HCT116 (cell line): ENCODE measurements at regions of chr5 and their contacts with region 1.

Region 1: DNA sequence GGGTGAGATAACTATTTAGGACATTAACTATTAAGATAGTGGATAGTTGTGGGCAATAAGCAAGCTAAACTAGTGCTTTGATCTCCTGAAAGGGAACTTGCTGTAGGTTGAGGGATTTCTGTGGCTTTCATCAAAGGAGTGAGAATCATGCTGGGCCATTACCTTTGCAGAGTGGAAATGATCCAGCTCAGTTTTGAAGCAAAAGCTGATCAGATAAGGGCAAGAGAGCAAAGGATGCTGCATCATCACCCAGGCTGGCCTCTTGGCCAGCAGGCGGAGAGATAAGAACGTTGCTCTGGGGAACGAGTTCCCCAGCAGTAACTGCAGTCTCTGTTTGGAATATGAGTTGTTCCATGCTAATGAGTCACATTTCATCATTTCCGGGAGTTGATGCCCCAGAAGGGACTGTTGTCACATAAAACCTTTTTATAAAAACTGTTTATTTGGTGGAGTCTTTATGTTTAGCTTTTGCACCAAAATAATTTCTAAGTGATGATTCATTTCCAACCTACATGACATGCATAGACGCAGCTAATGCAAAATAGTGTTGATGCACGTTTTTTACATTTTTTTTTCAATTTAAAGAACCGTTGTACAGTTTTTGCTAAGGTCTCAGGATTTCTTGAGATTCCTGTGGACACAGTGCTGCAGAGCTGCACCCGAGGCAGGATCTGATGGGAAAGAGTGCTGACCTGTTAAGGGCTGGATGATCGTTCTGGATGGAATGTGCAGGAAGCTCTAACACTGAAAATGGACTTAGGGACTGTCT is 99.3 kb downstream of the ACTBL2 start:
- DNase-seq: peak; percentile 92
- ATAC-seq: peak; percentile 96
- H3K4me3 ChIP-seq: peak overlapping the region in 1 of 2 experiments; percentile 17; a peak in 1 of 4 replicates
- H3K27ac ChIP-seq: peak overlapping the region; percentile 95
- H3K4me1 ChIP-seq: peaks cover 27 to 37% of the 10 kb centered on the region in 2 experiments
- H3K27me3 ChIP-seq: no peaks in the 10 kb centered on the region
- CTCF ChIP-seq: 0 out of 6 replicates have a peak, but pooled peaks of 1 of the 3 experiments have one; percentile 17
- POLR2A ChIP-seq: no peak
- RAD21 ChIP-seq: peak; percentile 50

Region 2: GRCh38 chr5:56112526-56113121 is 1270.7 kb before region 1 on chr5:
- CTCF ChIA-PET with region 1: no interaction called
- POLR2A ChIA-PET with region 1: no interaction called
- RAD21 ChIA-PET with region 1: no interaction called
- intact Hi-C with region 1: no loop called
- DNase-seq: no peak
- ATAC-seq: no peak
- H3K4me3 ChIP-seq: no peak overlapping the region
- H3K27ac ChIP-seq: no peak overlapping the region
- H3K4me1 ChIP-seq: no peaks in the 10 kb centered on the region
- H3K27me3 ChIP-seq: no peaks in the 10 kb centered on the region
- CTCF ChIP-seq: no peak
- POLR2A ChIP-seq: no peak
- RAD21 ChIP-seq: no peak

Region 3: GRCh38 chr5:57184322-57184721 is 199.0 kb before region 1 on chr5:
- CTCF ChIA-PET with region 1: no interaction called
- POLR2A ChIA-PET with region 1: no interaction called
- RAD21 ChIA-PET with region 1: no interaction called
- intact Hi-C with region 1: no loop called
- DNase-seq: no peak
- ATAC-seq: peak; percentile 85
- H3K4me3 ChIP-seq: no peak overlapping the region
- H3K27ac ChIP-seq: no peak overlapping the region
- H3K4me1 ChIP-seq: no peaks in the 10 kb centered on the region; a peak in 1 of 4 replicates
- H3K27me3 ChIP-seq: no peaks in the 10 kb centered on the region
- CTCF ChIP-seq: peak in 2 of 3 experiments; percentile 16 to 17; a peak in 2 of 6 replicates
- POLR2A ChIP-seq: no peak
- RAD21 ChIP-seq: peak; percentile 21; the same call in 1 of the 2 replicates

Region 4: GRCh38 chr5:57366744-57367143 is 16.5 kb before region 1 on chr5:
- CTCF ChIA-PET with region 1: no interaction called
- POLR2A ChIA-PET with region 1: interaction called, 12 read pairs
- RAD21 ChIA-PET with region 1: interaction called in 1 of 2 experiments, 3 read pairs
- intact Hi-C with region 1: loop called (anchors 1 kb)
- DNase-seq: peak; percentile 95
- ATAC-seq: peak; percentile 89
- H3K4me3 ChIP-seq: peak overlapping the region in 1 of 2 experiments; percentile 34; a peak in 2 of 4 replicates
- H3K27ac ChIP-seq: peak overlapping the region; percentile 93
- H3K4me1 ChIP-seq: peaks cover 44 to 69% of the 10 kb centered on the region in 2 experiments
- H3K27me3 ChIP-seq: no peaks in the 10 kb centered on the region
- CTCF ChIP-seq: no peak
- POLR2A ChIP-seq: no peak
- RAD21 ChIP-seq: peak; percentile 12; the same call in 1 of the 2 replicates

Region 5: DNA sequence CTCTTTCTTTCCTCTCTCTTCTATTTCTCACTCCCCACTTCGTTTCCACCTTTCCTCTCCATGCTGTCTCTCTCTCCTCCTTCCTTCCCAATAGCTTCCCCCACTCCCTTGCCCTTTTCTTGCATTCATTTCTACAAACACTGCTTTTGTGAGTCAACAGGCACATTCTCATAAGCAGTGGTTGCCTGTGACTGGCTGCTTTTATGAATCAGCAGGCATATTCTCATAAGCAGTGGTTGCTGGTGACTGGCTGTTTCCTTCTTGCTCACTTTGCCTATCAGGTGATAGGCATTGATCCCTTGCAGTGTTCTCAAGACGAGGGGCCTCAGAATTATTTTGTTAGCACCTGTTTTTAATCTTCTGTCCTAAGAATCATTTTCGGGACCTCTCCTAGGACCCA is 215.5 kb after region 1 on chr5:
- CTCF ChIA-PET with region 1: no interaction called
- POLR2A ChIA-PET with region 1: no interaction called
- RAD21 ChIA-PET with region 1: no interaction called
- intact Hi-C with region 1: no loop called
- DNase-seq: peak; percentile 0
- ATAC-seq: no peak
- H3K4me3 ChIP-seq: no peak overlapping the region
- H3K27ac ChIP-seq: no peak overlapping the region
- H3K4me1 ChIP-seq: peaks cover 0 to 6% of the 10 kb centered on the region in 2 experiments; a peak in 1 of 4 replicates
- H3K27me3 ChIP-seq: no peaks in the 10 kb centered on the region
- CTCF ChIP-seq: no peak
- POLR2A ChIP-seq: no peak
- RAD21 ChIP-seq: no peak